ENCODE measurements at regions of chr1 and their contacts with region 1.

Region 1: GRCh38 chr1:200620273-200621131 is at the start of gene KIF14:
- DNase-seq: peak; percentile 42
- ATAC-seq: peak; percentile 100
- H3K4me3 ChIP-seq: peak within 1 kb of the TSS; percentile 69 to 91
- H3K27ac ChIP-seq: peak within 1 kb of the TSS; percentile 84
- H3K4me1 ChIP-seq: peaks cover 10% of the 10 kb centered on the region; the same call in 1 of the 2 replicates
- H3K27me3 ChIP-seq: no peaks in the 10 kb centered on the region
- CTCF ChIP-seq: no peak
- total RNA-seq, gene KIF14: 17.8 TPM

Region 2: GRCh38 chr1:200739499-200740290 is 119.2 kb after region 1 on chr1:
- CTCF ChIA-PET with region 1: interaction called, 4 read pairs
- POLR2A ChIA-PET with region 1: no interaction called
- in situ Hi-C with region 1: no loop called
- intact Hi-C with region 1: loop called (anchors 5 kb)
- DNase-seq: no peak
- ATAC-seq: no peak
- H3K4me3 ChIP-seq: peak overlapping the region; percentile 90
- H3K27ac ChIP-seq: peak overlapping the region; percentile 93
- H3K4me1 ChIP-seq: peaks cover 17% of the 10 kb centered on the region
- H3K27me3 ChIP-seq: no peaks in the 10 kb centered on the region
- CTCF ChIP-seq: no peak

Region 3: GRCh38 chr1:200774735-200775444 is 154.4 kb after region 1 on chr1:
- CTCF ChIA-PET with region 1: interaction called, 8 read pairs
- POLR2A ChIA-PET with region 1: no interaction called
- in situ Hi-C with region 1: no loop called
- intact Hi-C with region 1: loop called (anchors 10 kb)
- DNase-seq: no peak
- ATAC-seq: no peak
- H3K4me3 ChIP-seq: no peak overlapping the region
- H3K27ac ChIP-seq: no peak overlapping the region
- H3K4me1 ChIP-seq: no peaks in the 10 kb centered on the region
- H3K27me3 ChIP-seq: no peaks in the 10 kb centered on the region
- CTCF ChIP-seq: no peak

Region 4: GRCh38 chr1:200802865-200803512 is 182.5 kb after region 1 on chr1:
- CTCF ChIA-PET with region 1: interaction called, 5 read pairs
- POLR2A ChIA-PET with region 1: no interaction called
- in situ Hi-C with region 1: no loop called
- intact Hi-C with region 1: loop called (anchors 2 kb)
- DNase-seq: peak; percentile 71
- ATAC-seq: peak; percentile 93
- H3K4me3 ChIP-seq: no peak overlapping the region
- H3K27ac ChIP-seq: no peak overlapping the region
- H3K4me1 ChIP-seq: no peaks in the 10 kb centered on the region
- H3K27me3 ChIP-seq: no peaks in the 10 kb centered on the region
- CTCF ChIP-seq: peak; percentile 91

Region 5: GRCh38 chr1:200837931-200838571 is 217.5 kb after region 1 on chr1:
- CTCF ChIA-PET with region 1: interaction called, 5 read pairs
- POLR2A ChIA-PET with region 1: no interaction called
- in situ Hi-C with region 1: no loop called
- intact Hi-C with region 1: loop called (anchors 10 kb)
- DNase-seq: no peak
- ATAC-seq: no peak
- H3K4me3 ChIP-seq: no peak overlapping the region
- H3K27ac ChIP-seq: no peak overlapping the region
- H3K4me1 ChIP-seq: no peaks in the 10 kb centered on the region
- H3K27me3 ChIP-seq: no peaks in the 10 kb centered on the region
- CTCF ChIP-seq: peak; percentile 43; the same call in 1 of the 2 replicates